ENCODE measurements at regions of chr2 and their contacts with region 1.

Region 1: DNA sequence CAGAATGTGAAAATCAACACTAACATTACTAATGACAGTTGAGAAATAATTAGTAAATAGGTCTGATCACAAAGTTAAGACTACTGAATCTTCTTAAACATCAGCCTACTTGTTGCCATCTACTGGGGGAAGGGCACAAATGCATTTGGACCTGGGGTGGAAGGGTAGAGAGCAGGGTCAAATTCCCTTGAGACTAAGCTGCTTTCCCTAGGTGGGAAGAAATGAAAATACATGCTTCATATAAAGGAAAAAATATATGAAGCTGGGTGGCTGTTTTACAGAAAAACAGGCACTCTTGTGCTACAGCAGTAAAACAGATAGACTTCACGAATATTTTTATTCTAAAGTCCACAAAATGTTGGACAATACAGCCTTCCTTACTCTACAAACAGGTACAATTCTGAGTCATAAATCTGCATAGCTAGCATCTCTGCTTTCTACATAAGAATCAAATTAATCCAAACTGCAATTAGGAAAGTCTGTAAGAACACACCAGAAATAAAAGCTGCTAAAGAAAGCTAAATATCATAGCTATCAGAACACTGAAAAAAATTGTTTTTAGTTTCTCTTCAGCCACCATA is 10.9 kb downstream of the TRIP12 start:
- DNase-seq: no peak
- H3K4me3 Mint-ChIP-seq: no peak overlapping the region
- H3K27ac Mint-ChIP-seq: peak overlapping the region; percentile 42
- H3K4me1 Mint-ChIP-seq: peaks cover 34% of the 10 kb centered on the region
- H3K27me3 Mint-ChIP-seq: no peaks in the 10 kb centered on the region

Region 2: GRCh38 chr2:229780856-229781773 is 129.8 kb before region 1 on chr2:
- CTCF ChIA-PET with region 1: interaction called, 18 read pairs
- DNase-seq: no peak
- H3K4me3 Mint-ChIP-seq: no peak overlapping the region
- H3K27ac Mint-ChIP-seq: peak overlapping the region; percentile 6
- H3K4me1 Mint-ChIP-seq: peaks cover 14% of the 10 kb centered on the region
- H3K27me3 Mint-ChIP-seq: no peaks in the 10 kb centered on the region

Region 3: DNA sequence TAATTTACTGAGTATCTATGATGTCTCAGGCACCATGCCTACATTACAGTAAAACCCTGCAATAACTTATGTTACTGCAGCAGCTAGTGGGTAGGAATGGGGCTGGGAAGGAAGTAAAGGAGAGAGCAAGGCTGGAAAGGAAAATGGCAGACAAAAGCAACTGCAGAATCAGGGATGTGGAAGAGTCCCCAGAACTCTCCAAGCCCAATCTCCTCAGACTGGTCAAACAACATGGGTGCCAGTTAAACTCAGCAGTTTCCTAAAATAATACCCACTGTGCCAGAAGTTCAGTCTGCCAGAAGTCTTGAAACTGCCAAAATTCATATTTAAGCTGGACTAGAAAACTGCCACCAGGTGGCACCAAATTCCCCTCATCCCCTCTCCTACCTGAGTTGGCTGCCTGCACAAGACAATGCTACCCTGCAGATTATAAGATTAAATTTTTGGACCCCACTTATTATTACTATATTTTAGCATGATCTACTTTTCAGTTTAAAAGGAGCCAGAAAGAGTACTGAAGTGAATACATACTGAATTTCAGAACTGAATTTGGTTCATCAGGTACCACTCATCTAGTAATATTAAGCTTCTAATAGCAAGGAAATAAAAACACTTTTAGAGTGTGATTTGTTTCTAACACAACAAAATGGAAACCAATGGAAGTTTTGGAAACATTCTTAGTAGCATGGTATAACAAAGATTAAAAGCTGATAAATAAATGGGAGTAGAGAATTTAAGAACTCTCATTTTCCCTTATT is 109.7 kb before region 1 on chr2:
- CTCF ChIA-PET with region 1: interaction called, 63 read pairs
- DNase-seq: peak; percentile 81
- H3K4me3 Mint-ChIP-seq: no peak overlapping the region
- H3K27ac Mint-ChIP-seq: no peak overlapping the region
- H3K4me1 Mint-ChIP-seq: peaks cover 2% of the 10 kb centered on the region
- H3K27me3 Mint-ChIP-seq: no peaks in the 10 kb centered on the region